Calu3 (cell line): ENCODE measurements at regions of chr18 and their contacts with region 1.

Region 1: DNA sequence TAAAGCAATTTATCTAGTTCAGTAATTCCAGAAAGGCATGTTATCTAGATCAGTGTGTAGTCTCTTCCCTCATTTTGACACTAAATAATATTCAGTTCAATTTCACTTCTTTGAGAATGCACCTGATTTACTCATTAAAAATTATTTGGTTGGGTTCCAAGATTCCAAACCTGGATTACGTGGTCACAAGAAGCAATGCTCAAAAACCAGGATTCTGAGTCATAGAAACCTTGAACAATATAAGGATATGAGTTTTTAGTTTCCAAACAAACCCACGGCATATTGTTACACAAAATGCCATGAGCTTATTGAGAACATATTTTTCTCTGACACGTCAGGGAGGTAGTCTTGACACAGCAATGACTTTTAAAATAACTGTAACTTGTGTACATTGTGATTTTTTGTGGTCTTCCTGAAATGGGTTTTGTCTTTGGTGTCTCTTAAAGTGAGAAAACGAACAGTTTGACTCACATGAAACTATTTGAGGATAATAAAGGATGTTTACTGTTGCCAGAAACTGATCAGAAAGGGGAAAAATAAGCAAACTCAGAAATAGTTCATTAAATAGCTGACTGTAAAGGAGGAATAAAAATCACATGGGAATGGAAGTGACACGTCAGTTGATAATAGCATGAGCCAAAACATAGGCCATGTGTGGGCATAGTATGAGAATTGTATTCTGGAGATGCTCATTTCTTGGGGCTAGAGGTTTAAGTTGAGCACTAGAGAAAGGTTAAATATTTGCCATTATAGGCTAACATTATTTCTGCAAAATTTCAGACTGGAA is 617.7 kb upstream of the CDH2 start:
- DNase-seq: no peak
- H3K4me3 Mint-ChIP-seq: peak overlapping the region; percentile 47
- H3K27ac Mint-ChIP-seq: peak overlapping the region; percentile 90
- H3K4me1 Mint-ChIP-seq: peaks cover 66% of the 10 kb centered on the region
- H3K27me3 Mint-ChIP-seq: no peaks in the 10 kb centered on the region
- CTCF ChIP-seq: no peak

Region 2: DNA sequence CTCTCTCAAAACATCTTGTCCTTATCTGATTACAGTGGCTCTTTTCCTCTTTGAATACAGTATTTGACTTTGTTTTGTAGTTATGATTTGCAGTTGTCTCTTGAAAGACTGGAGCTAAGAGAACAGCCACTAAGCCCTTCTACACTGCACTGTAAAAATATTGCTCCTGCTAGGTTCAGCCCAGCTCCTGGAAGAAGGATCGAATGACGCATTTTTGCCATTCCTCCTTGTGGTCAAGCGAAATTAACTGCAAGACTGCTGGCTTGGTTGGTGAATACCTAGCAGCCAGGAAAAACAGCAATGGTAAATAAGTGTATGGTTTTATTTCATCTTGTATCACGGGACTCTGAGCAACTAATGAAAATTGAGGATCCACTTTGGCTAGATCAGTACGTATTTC is 209.9 kb before region 1 on chr18:
- CTCF ChIA-PET with region 1: no interaction called
- intact Hi-C with region 1: no loop called
- DNase-seq: peak; percentile 12
- H3K4me3 Mint-ChIP-seq: no peak overlapping the region
- H3K27ac Mint-ChIP-seq: no peak overlapping the region
- H3K4me1 Mint-ChIP-seq: peaks cover 7% of the 10 kb centered on the region
- H3K27me3 Mint-ChIP-seq: no peaks in the 10 kb centered on the region
- CTCF ChIP-seq: no peak

Region 3: DNA sequence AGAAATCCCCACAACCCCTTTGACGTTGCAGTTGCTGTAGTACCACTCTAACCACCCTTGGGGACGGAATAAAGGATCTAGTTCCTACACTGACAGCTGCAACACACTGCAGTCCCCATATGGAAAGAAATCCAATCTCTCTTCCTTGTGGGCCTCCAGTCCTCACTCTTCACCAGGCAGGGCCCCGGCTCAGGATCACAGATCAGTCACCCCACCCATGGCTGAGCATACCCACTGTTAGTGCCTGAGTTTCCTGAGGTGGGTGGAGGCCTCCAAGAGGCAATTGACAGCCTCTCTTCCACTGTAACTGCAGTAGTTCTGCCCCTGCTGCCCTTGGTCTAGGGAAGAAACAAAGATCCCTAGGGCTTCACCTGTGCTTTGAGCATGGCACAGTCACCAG is 52.3 kb after region 1 on chr18:
- CTCF ChIA-PET with region 1: no interaction called
- intact Hi-C with region 1: no loop called
- DNase-seq: no peak
- H3K4me3 Mint-ChIP-seq: no peak overlapping the region
- H3K27ac Mint-ChIP-seq: no peak overlapping the region
- H3K4me1 Mint-ChIP-seq: no peaks in the 10 kb centered on the region
- H3K27me3 Mint-ChIP-seq: no peaks in the 10 kb centered on the region
- CTCF ChIP-seq: no peak

Region 4: DNA sequence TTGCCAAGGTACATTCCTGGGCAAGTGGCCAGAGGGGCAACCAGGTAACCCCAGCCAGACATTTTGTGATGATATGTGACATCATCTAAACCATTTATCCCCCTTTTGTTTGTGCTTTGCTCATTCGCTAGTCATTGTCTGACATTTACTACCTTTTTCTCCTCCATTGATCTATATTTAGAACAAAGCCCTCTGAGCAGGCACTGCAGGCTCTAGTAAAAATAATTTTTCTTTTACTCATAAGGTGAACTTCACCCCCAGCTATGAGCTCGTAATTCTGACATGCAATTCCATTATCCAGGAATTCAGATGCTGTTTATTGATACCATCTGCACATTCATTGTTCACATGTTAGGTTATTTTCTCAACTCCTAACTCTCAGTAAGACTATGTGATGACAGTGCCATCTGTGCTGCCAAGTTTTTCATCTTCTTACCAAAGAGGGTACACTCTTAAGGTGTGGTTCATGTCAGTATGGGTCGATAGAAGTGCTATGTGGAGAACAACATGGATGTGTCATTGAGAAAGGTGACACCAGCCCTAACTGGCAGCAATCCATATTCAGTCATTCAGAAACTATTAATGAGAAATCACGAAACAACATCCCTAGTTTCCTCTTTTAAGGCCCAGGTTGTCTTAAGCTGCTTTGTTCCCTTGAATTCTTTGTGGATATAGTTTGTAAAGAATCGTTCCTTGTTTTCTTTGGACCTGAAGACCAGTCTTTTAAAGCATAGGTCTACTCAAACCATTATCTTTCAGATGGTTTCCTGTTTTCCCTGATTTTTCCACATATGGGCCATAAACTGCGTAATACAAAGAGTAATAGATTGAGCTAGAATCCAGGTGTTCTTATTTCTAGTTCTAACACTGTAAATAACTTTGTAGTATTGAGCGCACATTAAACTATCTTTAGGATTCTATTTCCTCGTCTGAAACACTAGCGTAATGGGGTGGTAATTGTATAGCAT is 360.4 kb after region 1 on chr18:
- CTCF ChIA-PET with region 1: no interaction called
- intact Hi-C with region 1: loop called (anchors 10 kb)
- DNase-seq: peak; percentile 78
- H3K4me3 Mint-ChIP-seq: peak overlapping the region; percentile 29
- H3K27ac Mint-ChIP-seq: peak overlapping the region; percentile 86
- H3K4me1 Mint-ChIP-seq: peaks cover 59% of the 10 kb centered on the region
- H3K27me3 Mint-ChIP-seq: no peaks in the 10 kb centered on the region
- CTCF ChIP-seq: no peak